PC-9 (cell line): ENCODE measurements at regions of chr7 and their contacts with region 1.

Region 1: DNA sequence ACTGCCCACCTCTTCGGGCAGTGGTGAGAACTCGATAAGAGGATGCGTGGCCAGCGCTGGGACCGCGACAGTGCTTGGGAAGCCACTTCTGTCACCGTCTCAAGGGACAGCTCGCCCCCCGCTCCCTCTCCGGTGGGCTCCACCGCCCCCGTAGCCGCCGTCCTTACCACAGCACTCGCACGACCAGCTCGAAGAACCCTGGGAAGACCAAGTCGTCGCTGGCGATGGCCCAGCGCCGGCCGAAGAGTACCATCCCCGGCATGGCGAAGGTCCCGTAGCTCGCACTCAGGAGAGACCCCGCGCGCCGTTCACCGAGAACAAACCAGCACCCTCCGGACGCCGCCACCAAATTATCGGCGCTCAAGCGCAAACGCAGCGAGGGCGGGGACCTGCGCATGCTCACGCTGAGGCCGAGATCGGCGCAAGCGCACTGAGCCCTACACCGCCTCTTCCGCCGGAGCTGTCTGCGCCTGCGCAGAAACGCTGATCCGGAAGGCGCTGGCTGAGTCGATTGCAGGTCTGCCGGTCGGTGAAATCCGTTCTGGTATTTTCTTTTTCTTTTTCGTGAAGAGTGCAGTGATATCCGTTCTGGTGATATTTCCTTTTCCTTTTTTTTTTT is at the start of gene DAGLB:
- DNase-seq: peak; percentile 85 to 97
- H3K4me3 ChIP-seq: peak within 1 kb of the TSS; percentile 93
- H3K27ac ChIP-seq: peak within 1 kb of the TSS; percentile 96
- H3K4me1 ChIP-seq: peaks cover 40% of the 10 kb centered on the region
- H3K27me3 ChIP-seq: no peaks in the 10 kb centered on the region
- CTCF ChIP-seq: no peak; the same call in 1 of the 2 replicates
- total RNA-seq, gene DAGLB: 46.7 and 56.4 TPM in 2 replicates

Region 2: GRCh38 chr7:5469375-5470166 is 978.1 kb before region 1 on chr7:
- CTCF ChIA-PET with region 1: no interaction called
- POLR2A ChIA-PET with region 1: interaction called, 13 read pairs
- intact Hi-C with region 1: no loop called
- DNase-seq: no peak
- H3K4me3 ChIP-seq: no peak overlapping the region
- H3K27ac ChIP-seq: no peak overlapping the region
- H3K4me1 ChIP-seq: no peaks in the 10 kb centered on the region
- H3K27me3 ChIP-seq: no peaks in the 10 kb centered on the region
- CTCF ChIP-seq: no peak

Region 3: DNA sequence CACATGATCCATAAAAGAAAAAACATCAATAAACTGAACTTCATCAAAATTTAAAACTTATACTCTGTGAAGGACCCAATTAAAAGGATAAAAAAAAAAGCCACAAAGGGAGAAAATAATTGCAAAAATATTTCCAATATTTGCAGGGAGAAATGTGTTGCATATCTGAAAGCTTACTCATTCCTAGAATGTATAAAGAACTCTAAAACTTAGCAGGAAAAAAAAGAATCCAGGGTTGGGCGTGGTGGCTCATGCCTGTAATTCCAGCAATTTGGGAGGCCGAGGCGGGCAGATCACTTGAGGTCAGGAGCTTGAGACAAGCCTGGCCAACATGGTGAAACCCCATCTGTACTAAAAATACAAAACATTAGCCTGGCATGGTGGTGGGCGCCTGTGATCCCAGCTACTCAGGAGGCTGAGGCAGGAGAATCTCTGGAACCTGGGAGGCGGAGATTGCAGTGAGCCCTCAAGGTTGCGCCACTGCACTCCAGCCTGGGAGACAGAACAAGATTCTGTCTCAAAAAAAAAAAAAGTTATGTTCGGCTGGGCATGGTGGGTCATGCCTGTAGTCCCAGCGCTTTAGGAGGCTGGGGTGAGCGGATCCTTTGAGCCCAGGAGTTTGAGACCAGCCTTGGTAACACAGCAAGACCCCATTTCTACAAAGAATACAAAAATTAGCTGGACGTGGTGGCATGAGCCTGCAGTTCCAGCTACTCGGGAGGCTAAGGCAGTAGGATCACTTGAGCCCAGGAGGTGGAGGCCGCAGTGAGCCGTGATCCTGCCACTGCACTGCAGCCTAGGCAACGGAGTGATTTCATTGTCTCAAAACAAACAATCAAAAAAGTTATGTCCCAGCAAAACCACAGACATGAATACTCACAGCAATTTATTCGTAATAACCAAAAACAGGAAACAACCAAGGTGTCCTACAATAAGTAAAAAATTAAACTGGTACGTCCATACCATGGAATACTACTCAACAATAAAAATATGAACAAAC is 164.0 kb before region 1 on chr7:
- CTCF ChIA-PET with region 1: no interaction called
- POLR2A ChIA-PET with region 1: no interaction called
- intact Hi-C with region 1: loop called (anchors 5 kb)
- DNase-seq: peak; percentile 90 to 93
- H3K4me3 ChIP-seq: peak overlapping the region; percentile 48; the same call in 1 of the 2 replicates
- H3K27ac ChIP-seq: peak overlapping the region; percentile 100
- H3K4me1 ChIP-seq: peaks cover 35% of the 10 kb centered on the region
- H3K27me3 ChIP-seq: no peaks in the 10 kb centered on the region
- CTCF ChIP-seq: no peak

Region 4: GRCh38 chr7:6392706-6393666 is 54.7 kb before region 1 on chr7:
- CTCF ChIA-PET with region 1: interaction called, 4 read pairs
- POLR2A ChIA-PET with region 1: no interaction called
- intact Hi-C with region 1: loop called (anchors 2 kb)
- DNase-seq: peak; percentile 95 to 99
- H3K4me3 ChIP-seq: peak overlapping the region; percentile 42; the same call in 1 of the 2 replicates
- H3K27ac ChIP-seq: peak overlapping the region; percentile 93
- H3K4me1 ChIP-seq: peaks cover 77% of the 10 kb centered on the region
- H3K27me3 ChIP-seq: no peaks in the 10 kb centered on the region
- CTCF ChIP-seq: no peak

Region 5: DNA sequence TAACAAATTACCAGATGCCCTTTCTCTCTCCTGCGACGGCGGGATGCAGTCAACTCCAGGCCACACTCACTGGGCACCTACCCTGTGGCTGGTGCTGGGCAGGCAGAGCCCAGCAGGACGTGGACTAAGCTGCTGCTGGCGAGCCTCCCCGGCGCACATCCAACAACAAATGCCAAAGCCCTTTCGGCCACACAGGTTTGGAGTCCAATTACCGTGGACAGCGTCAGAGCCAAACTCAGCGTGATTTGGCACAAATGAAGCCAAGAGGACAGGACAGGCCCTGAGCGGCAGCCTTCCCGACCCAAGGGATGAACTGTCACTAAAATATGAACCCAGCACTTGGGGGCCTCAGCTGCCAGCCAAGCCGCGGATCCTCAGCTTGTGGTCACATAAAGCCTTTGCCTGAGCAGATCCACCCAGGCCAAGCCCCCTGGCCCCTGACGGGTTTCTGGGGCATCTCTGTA is 28.3 kb before region 1 on chr7:
- CTCF ChIA-PET with region 1: no interaction called
- POLR2A ChIA-PET with region 1: no interaction called
- intact Hi-C with region 1: no loop called
- DNase-seq: no peak
- H3K4me3 ChIP-seq: no peak overlapping the region
- H3K27ac ChIP-seq: no peak overlapping the region
- H3K4me1 ChIP-seq: 0 out of 2 replicates have a peak, but pooled peaks cover 3% of the 10 kb centered on the region
- H3K27me3 ChIP-seq: no peaks in the 10 kb centered on the region
- CTCF ChIP-seq: no peak

Region 6: GRCh38 chr7:6917258-6917657 is 469.6 kb after region 1 on chr7:
- CTCF ChIA-PET with region 1: no interaction called
- POLR2A ChIA-PET with region 1: no interaction called
- intact Hi-C with region 1: loop called (anchors 10 kb)
- DNase-seq: no peak
- H3K4me3 ChIP-seq: no peak overlapping the region
- H3K27ac ChIP-seq: no peak overlapping the region
- H3K4me1 ChIP-seq: no peaks in the 10 kb centered on the region
- H3K27me3 ChIP-seq: no peaks in the 10 kb centered on the region
- CTCF ChIP-seq: no peak